ENCODE measurements at regions of chr6 and their contacts with region 1.

Region 1: GRCh38 chr6:135002229-135002844 is 52.3 kb downstream of the HBS1L start:
- DNase-seq: peak; percentile 45
- H3K4me3 ChIP-seq: no peak overlapping the region
- H3K27ac ChIP-seq: no peak overlapping the region
- H3K4me1 ChIP-seq: no peaks in the 10 kb centered on the region
- H3K27me3 ChIP-seq: no peaks in the 10 kb centered on the region
- CTCF ChIP-seq: peak; percentile 36 to 38
- POLR2A ChIP-seq: no peak

Region 2: GRCh38 chr6:134161036-134161435 is 841.3 kb before region 1 on chr6:
- CTCF ChIA-PET with region 1: interaction called, 7 read pairs
- POLR2A ChIA-PET with region 1: no interaction called
- dilution Hi-C with region 1: no loop called
- intact Hi-C with region 1: loop called (anchors 1 kb)
- DNase-seq: no peak
- H3K4me3 ChIP-seq: no peak overlapping the region
- H3K27ac ChIP-seq: no peak overlapping the region
- H3K4me1 ChIP-seq: no peaks in the 10 kb centered on the region
- H3K27me3 ChIP-seq: no peaks in the 10 kb centered on the region
- CTCF ChIP-seq: no peak
- POLR2A ChIP-seq: no peak

Region 3: DNA sequence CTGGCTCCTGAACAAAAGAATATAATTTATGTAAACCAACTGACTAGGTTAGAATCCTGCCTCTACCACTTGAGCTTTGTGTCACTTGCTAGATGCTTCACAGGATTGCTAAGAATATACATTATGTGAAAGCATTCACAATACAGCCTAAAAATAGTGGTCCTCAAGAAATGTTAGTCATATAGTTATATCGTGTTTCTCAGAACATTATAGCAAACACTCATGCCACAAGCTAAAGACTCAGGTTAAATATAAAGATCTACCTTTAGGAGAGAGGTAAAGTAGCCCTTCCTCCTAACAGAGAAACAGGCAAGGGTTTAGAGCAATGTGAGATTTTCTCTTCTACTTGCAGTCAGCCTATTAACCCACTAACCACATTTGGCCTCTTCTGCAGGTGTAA is 34.6 kb before region 1 on chr6:
- CTCF ChIA-PET with region 1: interaction called, 13 read pairs
- POLR2A ChIA-PET with region 1: no interaction called
- dilution Hi-C with region 1: no loop called
- intact Hi-C with region 1: no loop called
- DNase-seq: no peak
- H3K4me3 ChIP-seq: no peak overlapping the region
- H3K27ac ChIP-seq: no peak overlapping the region
- H3K4me1 ChIP-seq: no peaks in the 10 kb centered on the region
- H3K27me3 ChIP-seq: no peaks in the 10 kb centered on the region
- CTCF ChIP-seq: no peak
- POLR2A ChIP-seq: no peak

Region 4: GRCh38 chr6:134990262-134990661 is 12.1 kb before region 1 on chr6:
- CTCF ChIA-PET with region 1: interaction called, 22 read pairs
- POLR2A ChIA-PET with region 1: no interaction called
- dilution Hi-C with region 1: no loop called
- intact Hi-C with region 1: no loop called
- DNase-seq: no peak
- H3K4me3 ChIP-seq: no peak overlapping the region
- H3K27ac ChIP-seq: no peak overlapping the region
- H3K4me1 ChIP-seq: peaks cover 6% of the 10 kb centered on the region
- H3K27me3 ChIP-seq: no peaks in the 10 kb centered on the region
- CTCF ChIP-seq: no peak
- POLR2A ChIP-seq: no peak

Measured in endothelial cell of umbilical vein (primary cell).